ENCODE measurements at regions of chr12 and their contacts with region 1.

Region 1: DNA sequence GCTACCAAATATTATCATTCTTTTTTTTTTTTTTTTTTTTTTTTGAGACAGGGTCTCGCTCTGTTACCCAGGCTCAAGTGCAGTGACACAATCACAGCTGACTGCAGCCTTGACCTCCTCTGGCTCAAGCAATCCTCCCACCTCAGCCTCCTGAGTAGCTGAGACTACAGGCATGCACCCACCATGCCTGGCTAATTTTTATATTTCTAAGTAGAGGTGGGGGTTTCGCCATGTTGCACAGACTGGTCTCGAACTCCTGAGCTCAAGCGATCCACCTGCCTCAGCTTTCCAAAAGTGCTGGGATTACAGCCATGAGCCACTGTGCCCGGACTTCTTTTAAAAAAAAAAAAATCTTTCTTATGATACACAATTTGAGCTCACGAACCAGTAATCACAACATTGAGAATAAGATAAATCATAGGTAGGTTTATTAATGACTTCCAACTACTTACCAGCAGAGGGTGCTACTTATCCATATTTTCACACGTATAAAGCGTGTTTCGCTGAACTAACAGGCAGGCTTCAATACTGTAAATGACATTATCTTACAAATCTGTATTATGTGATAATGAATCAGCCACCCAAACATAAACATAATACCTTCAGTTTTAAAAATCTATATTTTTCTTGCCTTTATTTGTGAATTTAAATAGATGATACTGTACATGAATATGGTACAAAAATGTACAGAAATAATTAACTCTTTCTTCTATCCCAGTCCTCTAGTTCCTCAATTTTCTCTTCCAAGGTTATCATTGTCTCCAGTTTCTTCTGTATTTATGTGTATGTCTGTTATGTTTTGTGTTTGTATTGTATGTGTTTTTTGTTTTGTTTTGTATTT is 42.5 kb upstream of the BCAT1 start:
- DNase-seq: no peak

Region 2: DNA sequence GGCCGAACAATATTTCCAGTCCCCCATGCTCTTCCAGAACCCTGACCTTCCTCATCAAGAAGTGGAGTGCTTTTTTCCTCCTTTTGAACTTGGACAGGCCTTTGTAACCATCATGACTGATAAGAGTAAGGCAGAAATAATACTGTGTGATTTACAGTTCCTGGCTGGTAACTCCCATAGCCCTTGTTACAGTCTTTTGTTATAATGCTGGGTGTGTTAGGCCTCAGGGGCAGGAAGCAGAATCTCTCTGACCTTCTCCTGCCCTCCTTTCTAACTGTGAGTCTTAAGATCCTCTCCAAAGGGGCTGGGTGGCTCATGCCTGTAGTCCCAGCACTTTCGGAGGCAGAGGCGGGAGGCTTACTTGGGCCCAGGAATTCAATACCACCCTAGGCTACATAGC is 102.0 kb before region 1 on chr12:
- intact Hi-C with region 1: no loop called
- DNase-seq: no peak

Region 3: GRCh38 chr12:25041006-25041741 is 49.7 kb after region 1 on chr12:
- intact Hi-C with region 1: no loop called
- DNase-seq: no peak

Region 4: DNA sequence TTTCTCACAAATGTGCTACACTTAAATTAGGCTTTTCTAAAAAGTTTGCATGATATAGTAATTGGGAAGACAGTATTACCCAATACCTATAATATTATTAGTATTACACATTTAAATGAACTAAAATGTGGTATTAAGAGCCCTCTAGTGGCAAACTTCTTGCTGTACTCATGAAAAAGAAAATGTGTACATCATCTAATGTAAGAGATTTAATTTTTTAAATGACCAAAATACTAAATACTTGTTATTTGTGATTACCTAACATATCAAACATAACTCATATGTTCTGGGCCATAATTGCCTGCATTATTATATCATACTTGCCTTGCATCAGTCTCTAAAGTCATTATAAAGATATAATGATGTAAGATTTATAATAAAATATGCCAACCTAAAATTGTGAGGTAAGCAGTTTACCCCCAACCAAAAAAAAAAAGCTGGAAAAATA is 139.3 kb after region 1 on chr12:
- intact Hi-C with region 1: loop called (anchors 2 kb)
- DNase-seq: no peak

Measured in cardiac septum (tissue), 1 donor.